ENCODE measurements at regions of chr4 and their contacts with region 1.

Region 1: GRCh38 chr4:103019308-103020124 is at the start of gene SLC9B1:
- DNase-seq: peak; percentile 91 to 94 (median 93)
- H3K4me3 ChIP-seq: peak within 1 kb of the TSS; percentile 11 to 90
- H3K4me3 Mint-ChIP-seq: peak within 1 kb of the TSS; percentile 85 to 98 (median 91)
- H3K27ac ChIP-seq: peak within 1 kb of the TSS; percentile 85
- H3K27ac Mint-ChIP-seq: peak within 1 kb of the TSS in 6 of 7 donors; percentile 97 to 100 (median 99)
- H3K4me1 ChIP-seq: peaks cover 17% of the 10 kb centered on the region
- H3K4me1 Mint-ChIP-seq: peaks cover 10 to 23% (median 19%) of the 10 kb centered on the region in 4 donors
- H3K27me3 ChIP-seq: no peaks in the 10 kb centered on the region
- H3K27me3 Mint-ChIP-seq: no peaks in the 10 kb centered on the region
- total RNA-seq, gene SLC9B1: 3.2 to 5.2 TPM

Region 2: DNA sequence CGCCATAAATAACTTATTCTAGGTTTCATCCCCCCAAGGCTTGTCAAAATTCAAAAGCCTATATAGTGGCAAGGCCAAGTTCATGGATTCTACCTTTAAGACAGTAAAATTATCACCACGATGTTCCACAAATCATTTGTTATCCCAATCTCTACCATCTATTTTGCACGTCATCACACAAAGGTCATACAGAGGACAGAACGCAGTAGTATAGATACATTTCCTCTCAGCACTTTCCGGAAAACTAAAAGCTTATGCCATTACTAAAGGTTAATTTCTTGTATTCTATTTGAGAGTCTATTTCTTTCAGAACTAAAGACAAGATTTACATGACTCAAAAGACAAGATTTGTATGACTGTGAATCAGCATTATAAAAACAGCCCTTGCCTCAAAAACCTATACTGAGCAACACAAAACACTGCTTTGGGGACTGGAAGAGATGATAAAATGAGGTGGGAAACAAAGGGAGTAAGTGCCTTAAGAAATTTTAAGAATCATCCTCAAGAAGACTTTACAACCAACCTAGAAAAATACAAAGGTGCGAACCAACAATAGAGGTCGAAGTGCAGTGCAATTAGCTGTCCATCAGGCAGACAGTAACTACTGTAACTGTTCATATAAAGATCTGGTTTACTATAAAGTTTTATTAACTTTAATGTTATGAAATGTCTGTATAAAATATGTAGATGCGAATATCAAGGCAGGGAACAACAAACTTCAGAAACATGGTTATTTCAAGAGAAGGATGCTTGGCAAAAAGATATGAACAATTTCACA is 199.7 kb before region 1 on chr4:
- CTCF ChIA-PET with region 1: no interaction called
- POLR2A ChIA-PET with region 1: no interaction called
- intact Hi-C with region 1: no loop called
- DNase-seq: peak; percentile 76 to 84 (median 79)
- H3K4me3 ChIP-seq: peak overlapping the region; percentile 19
- H3K4me3 Mint-ChIP-seq: peak overlapping the region in 5 of 8 donors; percentile 76 to 93 (median 88)
- H3K27ac ChIP-seq: peak overlapping the region; percentile 100
- H3K27ac Mint-ChIP-seq: peak overlapping the region in 6 of 7 donors; percentile 95 to 99 (median 98)
- H3K4me1 ChIP-seq: peaks cover 98% of the 10 kb centered on the region
- H3K4me1 Mint-ChIP-seq: peaks cover 67 to 87% (median 77%) of the 10 kb centered on the region in 4 donors
- H3K27me3 ChIP-seq: no peaks in the 10 kb centered on the region
- H3K27me3 Mint-ChIP-seq: no peaks in the 10 kb centered on the region

Region 3: DNA sequence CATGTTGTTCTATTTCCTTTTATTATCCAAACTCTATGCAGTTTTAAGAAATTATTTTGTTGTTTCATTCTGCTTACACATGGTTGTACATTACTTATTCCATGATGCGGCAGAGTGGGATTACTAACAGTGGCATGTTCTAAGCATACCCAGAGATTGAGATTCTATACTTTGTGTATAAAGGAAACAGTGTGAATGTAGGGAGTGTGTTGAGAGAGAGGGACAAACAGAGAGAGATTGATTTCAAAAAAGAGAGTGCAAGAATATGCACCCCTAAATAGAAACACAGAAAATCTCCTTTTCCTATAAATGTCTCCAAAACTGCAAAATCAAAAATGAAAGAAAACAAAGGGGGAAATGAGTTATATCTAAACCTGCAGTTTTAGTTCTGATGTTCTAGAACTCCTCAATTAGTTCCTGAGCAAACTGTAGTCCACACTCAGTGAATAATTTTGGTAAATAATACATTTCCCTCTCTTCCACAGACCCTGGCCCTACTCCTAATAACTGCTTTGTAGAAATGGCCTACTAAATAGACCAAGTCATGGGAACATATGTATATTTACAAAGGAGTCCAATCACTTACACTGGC is 31.0 kb before region 1 on chr4:
- CTCF ChIA-PET with region 1: no interaction called
- POLR2A ChIA-PET with region 1: no interaction called
- intact Hi-C with region 1: no loop called
- DNase-seq: no peak
- H3K4me3 ChIP-seq: no peak overlapping the region
- H3K4me3 Mint-ChIP-seq: no peak overlapping the region
- H3K27ac ChIP-seq: no peak overlapping the region
- H3K27ac Mint-ChIP-seq: peak overlapping the region in 1 of 7 donors; percentile 40
- H3K4me1 ChIP-seq: no peaks in the 10 kb centered on the region
- H3K4me1 Mint-ChIP-seq: no peaks in the 10 kb centered on the region
- H3K27me3 ChIP-seq: no peaks in the 10 kb centered on the region
- H3K27me3 Mint-ChIP-seq: no peaks in the 10 kb centered on the region

Region 4: GRCh38 chr4:103075901-103076739 is 56.6 kb after region 1 on chr4:
- CTCF ChIA-PET with region 1: no interaction called
- POLR2A ChIA-PET with region 1: interaction called, 6 read pairs
- intact Hi-C with region 1: loop called (anchors 1 kb)
- DNase-seq: peak; percentile 72 to 79 (median 76)
- H3K4me3 ChIP-seq: peak overlapping the region; percentile 26 to 72
- H3K4me3 Mint-ChIP-seq: peak overlapping the region; percentile 94 to 98 (median 98)
- H3K27ac ChIP-seq: peak overlapping the region; percentile 78
- H3K27ac Mint-ChIP-seq: peak overlapping the region; percentile 98 to 99 (median 99)
- H3K4me1 ChIP-seq: peaks cover 37% of the 10 kb centered on the region
- H3K4me1 Mint-ChIP-seq: peaks cover 24 to 58% (median 38%) of the 10 kb centered on the region in 4 donors
- H3K27me3 ChIP-seq: no peaks in the 10 kb centered on the region
- H3K27me3 Mint-ChIP-seq: no peaks in the 10 kb centered on the region

Region 5: GRCh38 chr4:103137446-103137827 is 117.9 kb after region 1 on chr4:
- CTCF ChIA-PET with region 1: no interaction called
- POLR2A ChIA-PET with region 1: no interaction called
- intact Hi-C with region 1: no loop called
- DNase-seq: no peak
- H3K4me3 ChIP-seq: no peak overlapping the region
- H3K4me3 Mint-ChIP-seq: no peak overlapping the region
- H3K27ac ChIP-seq: no peak overlapping the region
- H3K27ac Mint-ChIP-seq: peak overlapping the region in 3 of 7 donors; percentile 1 to 76 (median 29)
- H3K4me1 ChIP-seq: peaks cover 13% of the 10 kb centered on the region
- H3K4me1 Mint-ChIP-seq: peaks cover 7 to 15% (median 10%) of the 10 kb centered on the region in 4 donors
- H3K27me3 ChIP-seq: no peaks in the 10 kb centered on the region
- H3K27me3 Mint-ChIP-seq: no peaks in the 10 kb centered on the region

Region 6: GRCh38 chr4:103198111-103198765 is 178.7 kb after region 1 on chr4 and contains the start of gene CENPE:
- CTCF ChIA-PET with region 1: no interaction called
- POLR2A ChIA-PET with region 1: interaction called, 4 read pairs
- intact Hi-C with region 1: loop called (anchors 10 kb)
- DNase-seq: peak; percentile 82 to 90 (median 87)
- H3K4me3 ChIP-seq: peak within 1 kb of the TSS; percentile 67 to 75
- H3K4me3 Mint-ChIP-seq: peak within 1 kb of the TSS; percentile 92 to 100 (median 96)
- H3K27ac ChIP-seq: peak within 1 kb of the TSS; percentile 88
- H3K27ac Mint-ChIP-seq: peak within 1 kb of the TSS; percentile 87 to 100 (median 99)
- H3K4me1 ChIP-seq: peaks cover 10% of the 10 kb centered on the region
- H3K4me1 Mint-ChIP-seq: peaks cover 9 to 18% (median 13%) of the 10 kb centered on the region in 4 donors
- H3K27me3 ChIP-seq: no peaks in the 10 kb centered on the region
- H3K27me3 Mint-ChIP-seq: peaks cover 0 to 5% of the 10 kb centered on the region in 2 donors
- total RNA-seq, gene CENPE: 0.67 to 1.5 TPM

Region 7: GRCh38 chr4:103757631-103758030 is 738.1 kb after region 1 on chr4:
- CTCF ChIA-PET with region 1: no interaction called
- POLR2A ChIA-PET with region 1: no interaction called
- intact Hi-C with region 1: no loop called
- DNase-seq: no peak
- H3K4me3 ChIP-seq: no peak overlapping the region
- H3K4me3 Mint-ChIP-seq: no peak overlapping the region
- H3K27ac ChIP-seq: no peak overlapping the region
- H3K27ac Mint-ChIP-seq: no peak overlapping the region
- H3K4me1 ChIP-seq: no peaks in the 10 kb centered on the region
- H3K4me1 Mint-ChIP-seq: no peaks in the 10 kb centered on the region
- H3K27me3 ChIP-seq: no peaks in the 10 kb centered on the region
- H3K27me3 Mint-ChIP-seq: no peaks in the 10 kb centered on the region

Measured in CD4-positive, alpha-beta memory T cell (primary cell).